Naive thymus-derived CD4-positive, alpha-beta T cell (primary cell): ENCODE measurements at regions of chr9 and their contacts with region 1.

Region 1: DNA sequence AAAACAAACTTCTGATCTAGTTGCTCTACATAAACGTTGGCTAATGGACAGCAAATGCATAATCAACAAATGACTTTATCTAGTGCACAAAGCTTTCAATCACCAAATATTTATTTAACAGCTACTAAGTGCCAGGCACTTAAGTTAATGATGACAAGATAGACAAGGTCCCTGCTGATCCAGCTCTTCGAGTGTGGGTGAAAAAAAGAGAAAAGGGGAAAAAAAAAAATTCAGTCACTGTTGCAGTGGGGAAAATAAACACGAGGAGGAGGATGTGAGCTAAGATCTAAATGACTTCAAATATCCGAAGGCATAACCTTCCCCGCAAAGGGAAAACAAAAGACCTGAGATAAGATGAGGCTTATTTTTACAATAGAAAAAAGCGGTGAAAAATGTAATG is 9.6 kb downstream of the PSIP1 start:
- DNase-seq: peak in 1 of 9 donors; percentile 27
- ATAC-seq: no peak
- H3K4me3 ChIP-seq: no peak overlapping the region
- H3K4me3 Mint-ChIP-seq: peak overlapping the region in 8 of 10 donors; percentile 19 to 66 (median 52)
- H3K27ac ChIP-seq: no peak overlapping the region
- H3K27ac Mint-ChIP-seq: peak overlapping the region; percentile 11 to 92 (median 60)
- H3K4me1 ChIP-seq: peaks cover 8 to 28% of the 10 kb centered on the region in 2 donors
- H3K4me1 Mint-ChIP-seq: peaks cover 35 to 87% (median 70%) of the 10 kb centered on the region in 7 donors
- H3K27me3 ChIP-seq: no peaks in the 10 kb centered on the region
- H3K27me3 Mint-ChIP-seq: no peaks in the 10 kb centered on the region

Region 2: DNA sequence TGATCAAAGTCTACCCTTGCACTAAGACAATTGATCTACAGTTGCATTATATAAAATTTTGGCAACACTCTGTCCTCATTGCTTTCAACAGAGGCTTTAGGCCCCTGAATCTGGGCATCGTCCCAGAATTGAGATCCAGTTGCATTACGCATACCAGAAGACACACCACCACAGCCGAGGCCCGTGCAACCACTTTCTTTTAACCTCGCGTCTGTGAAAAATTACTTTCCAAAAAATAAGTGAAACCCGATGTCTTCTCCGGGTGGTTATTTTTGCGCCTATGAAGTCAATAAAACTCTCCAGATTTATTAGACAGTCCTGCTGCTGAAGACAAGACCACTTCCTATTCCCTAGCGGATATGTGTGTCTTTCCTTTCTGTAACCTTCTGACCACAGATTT is 1135.1 kb before region 1 on chr9:
- CTCF ChIA-PET with region 1: no interaction called
- POLR2A ChIA-PET with region 1: no interaction called
- intact Hi-C with region 1: no loop called
- DNase-seq: no peak
- ATAC-seq: no peak
- H3K4me3 ChIP-seq: no peak overlapping the region
- H3K4me3 Mint-ChIP-seq: no peak overlapping the region
- H3K27ac ChIP-seq: no peak overlapping the region
- H3K27ac Mint-ChIP-seq: no peak overlapping the region
- H3K4me1 ChIP-seq: no peaks in the 10 kb centered on the region
- H3K4me1 Mint-ChIP-seq: no peaks in the 10 kb centered on the region
- H3K27me3 ChIP-seq: peaks cover 0 to 3% of the 10 kb centered on the region in 2 donors
- H3K27me3 Mint-ChIP-seq: peaks cover 0 to 19% (median 14%) of the 10 kb centered on the region in 5 donors

Region 3: GRCh38 chr9:15244001-15244441 is 257.2 kb before region 1 on chr9:
- CTCF ChIA-PET with region 1: no interaction called
- POLR2A ChIA-PET with region 1: no interaction called
- intact Hi-C with region 1: no loop called
- DNase-seq: no peak
- ATAC-seq: no peak
- H3K4me3 ChIP-seq: no peak overlapping the region
- H3K4me3 Mint-ChIP-seq: no peak overlapping the region
- H3K27ac ChIP-seq: no peak overlapping the region
- H3K27ac Mint-ChIP-seq: peak overlapping the region in 2 of 9 donors; percentile 34 to 45
- H3K4me1 ChIP-seq: peaks cover 0 to 8% of the 10 kb centered on the region in 2 donors
- H3K4me1 Mint-ChIP-seq: peaks cover 21 to 69% (median 54%) of the 10 kb centered on the region in 7 donors
- H3K27me3 ChIP-seq: no peaks in the 10 kb centered on the region
- H3K27me3 Mint-ChIP-seq: no peaks in the 10 kb centered on the region

Region 4: GRCh38 chr9:15370466-15371447 is 130.4 kb before region 1 on chr9:
- CTCF ChIA-PET with region 1: no interaction called
- POLR2A ChIA-PET with region 1: no interaction called
- intact Hi-C with region 1: no loop called
- DNase-seq: no peak
- ATAC-seq: no peak
- H3K4me3 ChIP-seq: no peak overlapping the region
- H3K4me3 Mint-ChIP-seq: no peak overlapping the region
- H3K27ac ChIP-seq: no peak overlapping the region
- H3K27ac Mint-ChIP-seq: no peak overlapping the region
- H3K4me1 ChIP-seq: no peaks in the 10 kb centered on the region
- H3K4me1 Mint-ChIP-seq: peaks cover 0 to 7% (median 0%) of the 10 kb centered on the region in 7 donors
- H3K27me3 ChIP-seq: no peaks in the 10 kb centered on the region
- H3K27me3 Mint-ChIP-seq: peaks cover 0 to 7% (median 0%) of the 10 kb centered on the region in 5 donors

Region 5: DNA sequence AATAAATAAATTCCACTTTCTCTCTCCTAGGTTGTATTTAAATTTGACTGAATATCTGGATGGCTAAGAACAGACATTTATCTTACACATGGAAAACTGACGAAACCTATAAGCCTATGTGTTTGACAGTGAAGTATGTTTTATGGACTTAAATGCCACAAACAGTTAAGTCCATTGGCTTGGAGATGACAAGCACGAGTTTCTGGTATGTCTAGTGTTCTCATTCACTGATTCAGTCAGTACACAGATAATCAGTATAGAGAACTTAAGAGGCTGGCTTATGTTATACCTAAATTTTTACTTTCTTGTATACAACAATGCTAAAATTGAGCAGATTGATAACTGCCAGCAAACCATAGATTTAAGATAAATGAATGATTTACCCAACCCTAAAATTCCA is 39.6 kb before region 1 on chr9:
- CTCF ChIA-PET with region 1: no interaction called
- POLR2A ChIA-PET with region 1: interaction called, 3 read pairs
- intact Hi-C with region 1: loop called in 1 of 2 experiments (anchors 5 kb)
- DNase-seq: no peak
- ATAC-seq: no peak
- H3K4me3 ChIP-seq: no peak overlapping the region
- H3K4me3 Mint-ChIP-seq: no peak overlapping the region
- H3K27ac ChIP-seq: no peak overlapping the region
- H3K27ac Mint-ChIP-seq: peak overlapping the region in 2 of 9 donors; percentile 25 to 54
- H3K4me1 ChIP-seq: no peaks in the 10 kb centered on the region
- H3K4me1 Mint-ChIP-seq: peaks cover 0 to 3% (median under 1%) of the 10 kb centered on the region in 7 donors
- H3K27me3 ChIP-seq: no peaks in the 10 kb centered on the region
- H3K27me3 Mint-ChIP-seq: no peaks in the 10 kb centered on the region